ENCODE measurements at regions of chr15 and their contacts with region 1.

Region 1: GRCh38 chr15:99507504-99508310 is 58.1 kb upstream of the MEF2A start:
- DNase-seq: peak; percentile 73
- H3K4me3 ChIP-seq: peak overlapping the region; percentile 21; the same call in 1 of the 2 replicates
- H3K27ac ChIP-seq: peak overlapping the region; percentile 74
- H3K27me3 ChIP-seq: no peaks in the 10 kb centered on the region
- CTCF ChIP-seq: no peak

Region 2: DNA sequence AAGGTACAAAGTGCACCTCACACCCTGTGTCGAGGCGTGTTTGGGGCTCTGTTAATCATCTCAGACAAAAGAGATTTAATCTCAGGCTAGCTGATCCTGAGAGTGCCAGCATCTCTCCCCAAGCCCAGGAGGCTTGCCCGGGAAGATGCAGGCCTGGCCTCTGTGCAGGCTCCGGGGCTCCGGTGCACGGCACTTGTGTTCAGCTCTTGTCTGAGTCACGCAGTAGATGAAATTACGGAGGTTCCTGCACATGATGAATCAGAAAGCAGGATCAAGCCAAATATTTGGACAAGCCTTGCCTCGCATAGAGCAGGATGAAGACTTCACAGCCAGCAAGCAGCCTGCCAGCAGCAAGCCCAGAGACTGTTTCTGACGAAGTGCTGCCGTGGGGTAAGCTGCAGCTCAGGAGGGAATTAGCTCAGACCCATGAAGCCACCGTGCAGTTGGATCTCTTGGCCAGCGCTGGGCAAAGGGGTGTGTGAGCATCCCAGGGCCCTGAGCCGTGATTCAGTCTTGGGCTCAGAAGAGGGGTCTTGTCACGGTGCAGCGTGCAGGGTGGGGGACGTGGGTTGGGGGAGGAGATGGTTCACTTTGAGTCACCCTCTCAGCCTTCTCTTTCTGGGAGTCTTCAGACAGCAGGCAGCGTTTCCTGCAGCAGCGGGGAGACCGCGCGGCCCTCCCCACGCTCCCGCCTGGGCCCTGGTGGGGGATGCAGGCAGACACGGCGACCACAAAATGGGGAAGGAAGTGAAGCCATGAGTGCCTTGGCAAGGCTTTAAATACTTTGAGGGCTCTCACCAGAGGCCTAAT is 31.1 kb before region 1 on chr15:
- CTCF ChIA-PET with region 1: interaction called, 5 read pairs
- POLR2A ChIA-PET with region 1: interaction called, 15 read pairs
- DNase-seq: peak; percentile 97
- H3K4me3 ChIP-seq: peak overlapping the region; percentile 51
- H3K27ac ChIP-seq: peak overlapping the region; percentile 92
- H3K27me3 ChIP-seq: no peaks in the 10 kb centered on the region
- CTCF ChIP-seq: no peak